HEK293T (cell line): ENCODE measurements at regions of chr7 and their contacts with region 1.

Region 1: DNA sequence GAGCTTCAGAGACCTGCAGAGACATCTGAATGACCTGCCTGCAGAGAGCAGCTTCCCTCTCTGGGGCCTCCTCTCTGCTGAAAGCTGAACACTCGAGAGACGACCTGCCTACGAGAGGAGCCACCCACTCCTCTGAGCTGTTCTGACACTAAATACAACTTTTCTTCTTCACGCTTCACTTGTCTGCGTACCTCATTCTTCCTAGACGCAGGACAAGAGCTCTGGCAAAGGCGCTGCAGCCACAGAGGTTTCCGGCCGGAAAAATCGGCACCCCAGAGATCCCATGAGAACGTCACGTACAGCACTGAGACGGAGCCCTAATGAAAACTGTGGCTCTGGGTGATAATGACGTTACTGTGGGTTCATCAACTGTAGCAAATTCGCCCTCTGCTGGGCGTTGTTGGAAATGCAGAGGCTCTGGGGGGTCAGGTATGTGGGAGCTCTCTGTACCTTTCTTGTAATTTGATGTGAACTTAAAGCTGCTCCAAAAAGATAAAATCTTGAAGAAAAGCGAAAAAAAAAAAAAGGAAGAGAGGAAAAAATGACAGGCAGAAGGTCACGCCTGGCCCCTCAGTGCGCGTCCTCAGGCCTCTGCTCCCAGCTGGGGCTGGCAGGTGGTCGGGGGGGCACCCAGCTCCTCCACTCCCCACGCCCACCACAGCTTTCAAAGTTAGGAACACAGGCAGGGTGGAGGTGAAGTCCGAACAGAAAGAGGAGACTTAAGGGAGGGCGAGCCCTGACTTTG is 120.7 kb downstream of the DYNC2I1 start:
- DNase-seq: peak; percentile 83

Region 2: GRCh38 chr7:158885624-158886023 is 91.4 kb before region 1 on chr7:
- CTCF ChIA-PET with region 1: interaction called, 10 read pairs
- POLR2A ChIA-PET with region 1: no interaction called
- DNase-seq: no peak